ENCODE measurements at regions of chr20 and their contacts with region 1.

Region 1: DNA sequence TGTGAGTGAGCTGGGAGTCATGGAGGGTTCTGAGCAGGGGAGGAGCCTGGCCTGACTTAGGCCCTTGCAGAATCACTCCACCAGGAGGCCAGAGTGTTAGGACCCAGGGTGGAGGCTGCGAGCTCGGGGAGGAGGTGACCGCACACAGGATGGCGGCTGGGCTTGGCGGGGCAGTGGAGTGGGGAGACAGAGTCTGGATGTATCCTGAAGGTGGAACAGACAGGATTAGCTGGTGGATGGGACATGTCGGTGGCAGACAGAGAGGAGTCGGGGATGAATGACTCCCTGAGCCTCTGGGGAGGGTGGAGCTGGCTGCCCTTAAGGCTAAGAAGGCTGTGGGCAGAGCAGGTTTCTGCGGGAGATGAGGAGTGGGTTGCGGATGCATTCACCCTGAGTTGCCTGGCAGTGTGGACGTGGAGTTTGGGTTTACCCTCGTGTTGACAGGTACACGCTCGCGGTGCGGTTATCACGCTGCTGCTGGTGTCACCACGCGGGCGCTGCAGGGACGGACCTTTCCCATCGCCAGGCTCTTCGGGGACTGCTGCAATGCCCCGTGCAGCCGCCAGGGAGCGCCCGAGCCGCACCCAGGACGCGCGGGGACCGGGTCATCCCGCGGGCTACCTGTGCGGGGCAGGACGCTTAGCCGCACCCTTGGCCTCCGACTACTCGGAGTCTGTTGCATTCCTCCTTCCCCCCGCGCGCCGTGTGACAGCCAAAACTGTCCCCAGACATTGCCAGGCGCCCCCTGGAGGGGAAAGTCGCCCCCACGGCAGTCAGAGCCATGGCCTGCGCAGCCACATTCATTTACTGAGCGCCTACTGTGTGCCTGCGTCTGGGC is 43.0 kb upstream of the PTGIS start:
- DNase-seq: peak; percentile 84
- ATAC-seq: peak; percentile 88
- H3K4me3 ChIP-seq: peak overlapping the region in 2 of 5 experiments; percentile 15
- H3K4me3 Mint-ChIP-seq: peak overlapping the region; percentile 67
- H3K27ac ChIP-seq: peak overlapping the region in 1 of 2 donors; percentile 6
- H3K27ac Mint-ChIP-seq: no peak overlapping the region
- H3K4me1 ChIP-seq: peaks cover 14 to 20% of the 10 kb centered on the region in 2 donors
- H3K4me1 Mint-ChIP-seq: peaks cover 18% of the 10 kb centered on the region
- H3K27me3 ChIP-seq: peaks cover 0 to 29% (median 8%) of the 10 kb centered on the region in 4 experiments
- H3K27me3 Mint-ChIP-seq: peaks cover 14% of the 10 kb centered on the region
- CTCF ChIP-seq: peak; percentile 100

Region 2: DNA sequence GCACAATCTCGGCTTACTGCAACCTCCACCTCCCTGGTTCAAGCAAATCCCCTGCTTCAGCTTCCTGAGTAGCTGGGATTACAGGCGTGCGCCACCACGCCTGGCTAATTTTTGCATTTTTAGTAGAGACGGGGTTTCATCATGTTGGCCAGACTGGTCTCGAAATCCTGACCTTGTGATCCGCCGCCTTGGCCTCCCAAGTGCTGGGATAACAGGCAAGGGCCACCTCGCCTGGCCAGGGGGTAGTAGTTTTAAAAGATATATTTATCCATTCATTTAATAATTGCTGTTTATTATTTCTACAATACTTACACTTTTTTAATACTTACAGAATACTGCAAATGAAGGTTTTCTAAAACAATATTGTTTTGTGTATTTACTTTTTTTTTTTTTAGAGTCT is 407.2 kb before region 1 on chr20:
- CTCF ChIA-PET with region 1: no interaction called
- POLR2A ChIA-PET with region 1: no interaction called
- intact Hi-C with region 1: no loop called
- DNase-seq: no peak
- ATAC-seq: no peak
- H3K4me3 ChIP-seq: no peak overlapping the region
- H3K4me3 Mint-ChIP-seq: no peak overlapping the region
- H3K27ac ChIP-seq: no peak overlapping the region
- H3K27ac Mint-ChIP-seq: no peak overlapping the region
- H3K4me1 ChIP-seq: no peaks in the 10 kb centered on the region
- H3K4me1 Mint-ChIP-seq: no peaks in the 10 kb centered on the region
- H3K27me3 ChIP-seq: no peaks in the 10 kb centered on the region
- H3K27me3 Mint-ChIP-seq: no peaks in the 10 kb centered on the region
- CTCF ChIP-seq: no peak

Region 3: DNA sequence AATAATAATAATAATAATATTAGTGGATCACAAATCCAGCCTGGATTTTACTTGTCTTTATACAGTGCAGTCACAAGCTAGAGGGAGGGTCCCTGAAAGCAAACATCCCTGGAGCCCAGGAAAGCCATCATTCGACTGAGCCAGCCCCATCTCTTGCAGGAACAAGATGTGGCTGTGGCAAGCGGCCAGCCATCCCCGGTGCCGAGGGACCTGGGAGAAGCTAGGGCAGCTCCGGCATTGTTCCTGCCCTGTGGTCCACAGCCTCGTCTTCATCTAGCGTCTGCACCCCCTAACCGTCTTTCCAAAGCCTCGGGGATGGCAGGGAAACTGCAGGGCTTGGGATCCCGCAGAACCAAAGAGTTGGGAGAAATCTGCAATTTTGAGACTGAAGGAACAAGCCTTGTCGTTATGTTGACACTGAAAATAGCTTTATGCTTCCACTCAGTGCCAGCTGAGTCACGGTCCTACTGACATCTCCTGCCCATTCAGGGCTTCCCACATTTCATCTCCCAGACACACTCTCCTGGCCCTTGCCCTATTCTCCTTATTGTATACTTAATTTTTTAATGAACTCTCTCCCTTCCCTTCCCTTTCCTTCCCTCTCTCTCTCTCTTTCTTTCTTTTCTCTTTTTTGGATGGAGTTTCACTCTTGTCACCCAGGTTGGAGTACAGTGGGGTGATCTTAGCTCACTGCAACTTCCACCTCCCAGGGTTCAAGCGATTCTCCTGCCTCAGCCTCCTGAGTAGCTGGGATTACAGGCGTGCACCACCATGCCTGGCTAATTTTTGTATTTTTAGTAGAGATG is 270.6 kb before region 1 on chr20:
- CTCF ChIA-PET with region 1: no interaction called
- POLR2A ChIA-PET with region 1: no interaction called
- intact Hi-C with region 1: no loop called
- DNase-seq: no peak
- ATAC-seq: no peak
- H3K4me3 ChIP-seq: no peak overlapping the region
- H3K4me3 Mint-ChIP-seq: no peak overlapping the region
- H3K27ac ChIP-seq: no peak overlapping the region
- H3K27ac Mint-ChIP-seq: no peak overlapping the region
- H3K4me1 ChIP-seq: no peaks in the 10 kb centered on the region
- H3K4me1 Mint-ChIP-seq: no peaks in the 10 kb centered on the region
- H3K27me3 ChIP-seq: peaks cover 0 to 5% (median 2%) of the 10 kb centered on the region in 4 experiments
- H3K27me3 Mint-ChIP-seq: peaks cover 21% of the 10 kb centered on the region
- CTCF ChIP-seq: no peak

Region 4: GRCh38 chr20:49541733-49542513 is 69.0 kb before region 1 on chr20:
- CTCF ChIA-PET with region 1: interaction called, 27 read pairs
- POLR2A ChIA-PET with region 1: no interaction called
- intact Hi-C with region 1: loop called (anchors 1 kb)
- DNase-seq: peak; percentile 67
- ATAC-seq: peak; percentile 39
- H3K4me3 ChIP-seq: no peak overlapping the region
- H3K4me3 Mint-ChIP-seq: no peak overlapping the region
- H3K27ac ChIP-seq: no peak overlapping the region
- H3K27ac Mint-ChIP-seq: no peak overlapping the region
- H3K4me1 ChIP-seq: no peaks in the 10 kb centered on the region
- H3K4me1 Mint-ChIP-seq: no peaks in the 10 kb centered on the region
- H3K27me3 ChIP-seq: peaks cover 0 to 8% (median 3%) of the 10 kb centered on the region in 4 experiments
- H3K27me3 Mint-ChIP-seq: peaks cover 16% of the 10 kb centered on the region
- CTCF ChIP-seq: peak; percentile 70

Region 5: DNA sequence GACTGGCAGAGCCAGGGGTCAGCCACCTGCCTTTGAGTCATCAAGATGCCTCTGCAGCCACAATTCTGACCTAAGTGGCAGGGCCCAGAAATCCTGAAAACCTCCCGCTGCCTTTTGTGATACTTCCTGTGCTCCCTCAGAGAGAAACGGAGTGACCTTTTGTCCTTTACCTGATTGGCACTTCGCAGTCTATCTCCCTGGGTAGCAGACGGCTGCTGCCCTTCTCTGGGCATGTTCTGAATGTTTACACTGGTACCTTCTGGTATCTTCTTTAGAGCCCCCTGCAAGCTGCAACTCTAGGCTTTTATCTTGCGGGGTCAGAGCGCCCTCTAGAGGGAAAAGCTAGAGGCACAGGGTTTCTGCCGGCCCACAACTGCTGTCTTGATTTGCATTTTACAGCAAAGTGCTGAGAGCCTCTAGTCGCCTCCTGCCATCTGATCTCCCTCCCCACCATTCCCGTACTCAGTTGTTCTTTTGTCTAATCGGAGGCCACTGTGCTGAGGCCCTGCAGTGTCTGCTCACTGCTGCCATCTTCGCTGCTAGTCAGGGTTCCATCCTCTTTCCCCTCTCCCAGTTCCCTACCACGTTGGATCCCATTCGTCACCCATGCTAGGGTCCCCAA is 277.5 kb after region 1 on chr20:
- CTCF ChIA-PET with region 1: interaction called, 6 read pairs
- POLR2A ChIA-PET with region 1: interaction called, 11 read pairs
- intact Hi-C with region 1: loop called (anchors 1 kb)
- DNase-seq: peak; percentile 71
- ATAC-seq: peak; percentile 66
- H3K4me3 ChIP-seq: no peak overlapping the region
- H3K4me3 Mint-ChIP-seq: no peak overlapping the region
- H3K27ac ChIP-seq: no peak overlapping the region
- H3K27ac Mint-ChIP-seq: peak overlapping the region; percentile 43
- H3K4me1 ChIP-seq: peaks cover 0 to 1% of the 10 kb centered on the region in 2 donors
- H3K4me1 Mint-ChIP-seq: peaks cover 4% of the 10 kb centered on the region
- H3K27me3 ChIP-seq: no peaks in the 10 kb centered on the region
- H3K27me3 Mint-ChIP-seq: no peaks in the 10 kb centered on the region
- CTCF ChIP-seq: peak; percentile 77

Region 6: GRCh38 chr20:49928401-49929141 is 317.7 kb after region 1 on chr20:
- CTCF ChIA-PET with region 1: interaction called, 4 read pairs
- POLR2A ChIA-PET with region 1: no interaction called
- intact Hi-C with region 1: loop called (anchors 1 kb)
- DNase-seq: peak; percentile 81
- ATAC-seq: peak; percentile 91
- H3K4me3 ChIP-seq: no peak overlapping the region
- H3K4me3 Mint-ChIP-seq: no peak overlapping the region
- H3K27ac ChIP-seq: no peak overlapping the region
- H3K27ac Mint-ChIP-seq: peak overlapping the region; percentile 15
- H3K4me1 ChIP-seq: no peaks in the 10 kb centered on the region
- H3K4me1 Mint-ChIP-seq: peaks cover 4% of the 10 kb centered on the region
- H3K27me3 ChIP-seq: no peaks in the 10 kb centered on the region
- H3K27me3 Mint-ChIP-seq: peaks cover 9% of the 10 kb centered on the region
- CTCF ChIP-seq: peak; percentile 95